HepG2 (cell line): ENCODE measurements at regions of chr3 and their contacts with region 1.

Region 1: GRCh38 chr3:82707035-82707434 is 945.6 kb upstream of the GBE1 start:
- DNase-seq: no peak
- ATAC-seq: peak; percentile 99
- H3K4me3 ChIP-seq: no peak overlapping the region
- H3K27ac ChIP-seq: no peak overlapping the region
- H3K4me1 ChIP-seq: no peaks in the 10 kb centered on the region
- H3K27me3 ChIP-seq: no peaks in the 10 kb centered on the region
- CTCF ChIP-seq: peak; percentile 74
- EP300 ChIP-seq: no peak
- POLR2A ChIP-seq: no peak
- RAD21 ChIP-seq: peak; percentile 65; the same call in 1 of the 2 replicates

Region 2: GRCh38 chr3:81419228-81419627 is 1287.8 kb before region 1 on chr3:
- CTCF ChIA-PET with region 1: no interaction called
- POLR2A ChIA-PET with region 1: no interaction called
- in situ Hi-C with region 1: no loop called
- intact Hi-C with region 1: no loop called
- DNase-seq: peak; percentile 1
- ATAC-seq: no peak
- H3K4me3 ChIP-seq: no peak overlapping the region
- H3K27ac ChIP-seq: no peak overlapping the region
- H3K4me1 ChIP-seq: no peaks in the 10 kb centered on the region
- H3K27me3 ChIP-seq: no peaks in the 10 kb centered on the region
- CTCF ChIP-seq: peak; percentile 40
- EP300 ChIP-seq: no peak
- POLR2A ChIP-seq: no peak
- RAD21 ChIP-seq: no peak

Region 3: DNA sequence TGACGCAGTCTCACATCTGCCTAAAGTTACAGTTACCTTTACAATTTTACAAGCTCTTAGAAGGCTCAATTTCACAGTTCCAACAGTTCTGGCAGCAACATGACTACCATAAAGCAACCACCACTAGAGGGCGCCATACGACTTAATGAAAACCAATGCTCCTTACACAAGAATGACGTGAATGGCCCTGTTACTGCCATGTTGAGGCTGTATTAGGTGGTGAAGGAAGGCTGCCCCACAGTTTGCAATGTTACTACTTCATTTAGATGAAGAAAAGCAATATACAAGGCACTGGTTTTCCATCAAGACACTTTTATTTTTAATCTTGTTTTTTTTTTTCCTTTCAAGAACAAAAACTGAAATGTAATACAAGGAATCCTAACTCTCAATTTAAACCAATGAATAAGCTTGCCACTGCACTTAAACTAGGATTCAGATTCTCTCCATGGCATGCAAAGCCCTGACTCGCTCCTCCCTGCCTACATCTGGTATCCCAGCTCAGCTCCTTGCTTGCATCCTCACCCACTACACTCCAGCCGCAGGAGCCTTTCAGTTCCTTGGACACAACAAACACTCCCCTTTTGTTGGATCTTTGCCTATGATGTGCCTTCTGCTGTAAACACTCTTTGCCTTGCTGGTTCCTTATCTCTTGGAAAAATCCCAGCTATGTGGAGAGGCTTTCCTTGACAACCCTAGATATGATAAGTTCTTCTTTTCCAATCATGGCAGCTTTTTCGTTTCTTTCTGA is 1216.3 kb before region 1 on chr3:
- CTCF ChIA-PET with region 1: no interaction called
- POLR2A ChIA-PET with region 1: no interaction called
- in situ Hi-C with region 1: no loop called
- intact Hi-C with region 1: loop called (anchors 1 kb)
- DNase-seq: peak; percentile 81
- ATAC-seq: peak; percentile 99
- H3K4me3 ChIP-seq: no peak overlapping the region
- H3K27ac ChIP-seq: no peak overlapping the region
- H3K4me1 ChIP-seq: no peaks in the 10 kb centered on the region
- H3K27me3 ChIP-seq: no peaks in the 10 kb centered on the region
- CTCF ChIP-seq: peak; percentile 78
- EP300 ChIP-seq: no peak
- POLR2A ChIP-seq: no peak
- RAD21 ChIP-seq: peak; percentile 41; the same call in 1 of the 2 replicates

Region 4: DNA sequence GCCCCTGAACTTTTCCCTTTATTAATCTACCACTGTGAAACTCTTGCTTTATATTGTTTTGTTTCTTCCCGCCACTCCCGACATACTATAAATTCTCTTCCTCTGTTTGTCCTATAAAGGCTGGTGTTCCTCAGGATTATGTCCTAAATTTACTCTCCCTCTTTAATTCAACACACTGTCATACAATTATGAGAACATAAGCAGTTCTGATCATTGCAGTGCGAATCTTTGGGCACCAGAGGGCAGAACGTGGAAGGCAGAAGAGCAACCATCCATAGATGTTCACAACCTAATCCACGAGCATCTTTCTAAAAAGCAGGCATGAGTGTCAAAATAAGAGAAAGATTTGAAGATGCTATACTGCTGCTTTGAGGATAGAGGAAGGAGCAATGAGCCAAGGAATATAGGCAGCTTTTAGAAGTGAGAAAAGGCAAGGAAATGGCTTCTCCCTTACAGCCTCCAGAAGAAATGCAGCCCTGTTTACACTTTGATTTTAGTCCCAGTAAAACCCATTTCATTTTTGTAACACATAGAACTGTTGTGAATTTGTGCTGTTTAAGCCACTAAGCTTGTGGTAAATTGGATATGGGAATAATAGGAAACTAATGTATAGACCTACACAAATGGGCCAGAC is 1125.0 kb before region 1 on chr3:
- CTCF ChIA-PET with region 1: no interaction called
- POLR2A ChIA-PET with region 1: no interaction called
- in situ Hi-C with region 1: no loop called
- intact Hi-C with region 1: loop called (anchors 2 kb)
- DNase-seq: peak; percentile 20
- ATAC-seq: peak; percentile 87
- H3K4me3 ChIP-seq: no peak overlapping the region
- H3K27ac ChIP-seq: no peak overlapping the region
- H3K4me1 ChIP-seq: no peaks in the 10 kb centered on the region
- H3K27me3 ChIP-seq: no peaks in the 10 kb centered on the region
- CTCF ChIP-seq: peak; percentile 72
- EP300 ChIP-seq: no peak
- POLR2A ChIP-seq: no peak
- RAD21 ChIP-seq: peak; percentile 25; the same call in 1 of the 2 replicates

Region 5: DNA sequence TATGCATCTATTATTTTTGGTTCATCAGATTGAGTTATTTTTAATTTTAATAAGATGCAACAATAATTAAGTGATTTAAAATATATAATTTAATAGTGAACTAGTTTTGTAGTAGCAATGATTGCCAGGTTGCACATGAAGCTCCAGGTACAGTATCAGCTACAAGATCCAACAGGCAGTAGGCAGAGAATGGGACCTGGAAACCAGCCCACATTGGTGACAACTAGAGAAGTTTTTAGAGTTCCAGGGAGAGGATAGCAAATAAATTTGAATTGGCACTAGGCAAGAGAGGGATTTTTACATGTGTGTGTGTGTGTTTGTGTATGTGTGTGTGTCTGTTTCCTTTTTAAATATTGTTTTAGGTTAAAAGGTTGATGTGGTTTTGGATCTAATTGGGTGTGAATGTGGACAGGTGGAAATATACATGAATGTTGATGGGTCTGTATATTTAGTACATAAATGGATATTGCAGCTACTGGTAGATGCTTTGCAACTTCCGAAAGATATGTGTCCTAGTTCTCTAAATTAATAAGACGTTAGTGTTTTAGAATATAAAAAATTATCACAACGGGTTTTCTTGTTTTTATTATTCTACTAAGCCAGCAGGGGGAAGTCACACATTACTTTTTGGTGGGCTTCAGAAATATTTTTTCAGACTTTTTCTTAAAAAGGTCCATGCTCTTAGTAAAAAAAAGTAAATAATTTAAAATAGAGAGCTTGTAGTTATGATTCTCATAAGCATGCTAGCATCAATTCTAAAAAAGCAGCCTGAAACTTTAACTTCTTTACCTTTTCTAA is 835.5 kb before region 1 on chr3:
- CTCF ChIA-PET with region 1: no interaction called
- POLR2A ChIA-PET with region 1: no interaction called
- in situ Hi-C with region 1: no loop called
- intact Hi-C with region 1: loop called (anchors 2 kb)
- DNase-seq: no peak
- ATAC-seq: no peak
- H3K4me3 ChIP-seq: no peak overlapping the region
- H3K27ac ChIP-seq: no peak overlapping the region
- H3K4me1 ChIP-seq: no peaks in the 10 kb centered on the region
- H3K27me3 ChIP-seq: no peaks in the 10 kb centered on the region; a peak in 1 of 5 replicates
- CTCF ChIP-seq: no peak
- EP300 ChIP-seq: no peak
- POLR2A ChIP-seq: no peak
- RAD21 ChIP-seq: no peak

Region 6: GRCh38 chr3:81910244-81910852 is 796.7 kb before region 1 on chr3:
- CTCF ChIA-PET with region 1: interaction called, 3 read pairs
- POLR2A ChIA-PET with region 1: no interaction called
- in situ Hi-C with region 1: no loop called
- intact Hi-C with region 1: loop called (anchors 1 kb)
- DNase-seq: peak; percentile 46
- ATAC-seq: peak; percentile 73
- H3K4me3 ChIP-seq: no peak overlapping the region
- H3K27ac ChIP-seq: no peak overlapping the region
- H3K4me1 ChIP-seq: no peaks in the 10 kb centered on the region
- H3K27me3 ChIP-seq: no peaks in the 10 kb centered on the region
- CTCF ChIP-seq: peak; percentile 73
- EP300 ChIP-seq: no peak
- POLR2A ChIP-seq: no peak
- RAD21 ChIP-seq: no peak

Region 7: GRCh38 chr3:82496890-82497560 is 210.0 kb before region 1 on chr3:
- CTCF ChIA-PET with region 1: no interaction called
- POLR2A ChIA-PET with region 1: no interaction called
- in situ Hi-C with region 1: no loop called
- intact Hi-C with region 1: loop called (anchors 1 kb)
- DNase-seq: peak; percentile 38
- ATAC-seq: peak; percentile 75
- H3K4me3 ChIP-seq: no peak overlapping the region
- H3K27ac ChIP-seq: no peak overlapping the region
- H3K4me1 ChIP-seq: no peaks in the 10 kb centered on the region
- H3K27me3 ChIP-seq: no peaks in the 10 kb centered on the region
- CTCF ChIP-seq: peak; percentile 47
- EP300 ChIP-seq: no peak
- POLR2A ChIP-seq: no peak
- RAD21 ChIP-seq: no peak